ENCODE measurements at regions of chr17 and their contacts with region 1.

Region 1: GRCh38 chr17:76397687-76398487 is 13.5 kb downstream of the SPHK1 start:
- DNase-seq: peak; percentile 95
- ATAC-seq: peak; percentile 84

Region 2: GRCh38 chr17:76302606-76303005 is 95.3 kb before region 1 on chr17:
- intact Hi-C with region 1: loop called (anchors 1 kb)
- DNase-seq: no peak
- ATAC-seq: no peak

Measured in sciatic nerve (tissue), 2 donors.